ENCODE measurements at regions of chr15 and their contacts with region 1.

Region 1: GRCh38 chr15:38699633-38700230 is 135.1 kb upstream of the RASGRP1 start:
- DNase-seq: peak; percentile 76
- H3K4me3 ChIP-seq: no peak overlapping the region
- H3K27ac ChIP-seq: no peak overlapping the region
- H3K4me1 ChIP-seq: peaks cover 6 to 23% (median 15%) of the 10 kb centered on the region in 4 donors
- H3K27me3 ChIP-seq: no peaks in the 10 kb centered on the region
- CTCF ChIP-seq: peak; percentile 76 to 86 (median 81)
- EP300 ChIP-seq: no peak
- POLR2A ChIP-seq: no peak

Region 2: GRCh38 chr15:37995461-37996347 is 704.0 kb before region 1 on chr15:
- in situ Hi-C with region 1: loop called in 3 of 4 experiments (anchors 10 to 25 kb)
- intact Hi-C with region 1: no loop called
- DNase-seq: no peak
- H3K4me3 ChIP-seq: no peak overlapping the region
- H3K27ac ChIP-seq: no peak overlapping the region
- H3K4me1 ChIP-seq: no peaks in the 10 kb centered on the region
- H3K27me3 ChIP-seq: no peaks in the 10 kb centered on the region
- CTCF ChIP-seq: peak; percentile 44 to 55 (median 48)
- EP300 ChIP-seq: no peak
- POLR2A ChIP-seq: no peak

Region 3: GRCh38 chr15:38440353-38441129 is 259.2 kb before region 1 on chr15:
- in situ Hi-C with region 1: loop called in 1 of 4 experiments (anchors 25 kb)
- intact Hi-C with region 1: no loop called
- DNase-seq: peak; percentile 33
- H3K4me3 ChIP-seq: no peak overlapping the region
- H3K27ac ChIP-seq: no peak overlapping the region
- H3K4me1 ChIP-seq: peaks cover 0 to 10% (median 2%) of the 10 kb centered on the region in 4 donors
- H3K27me3 ChIP-seq: peaks cover 29% of the 10 kb centered on the region
- CTCF ChIP-seq: peak; percentile 91 to 96 (median 93)
- EP300 ChIP-seq: no peak
- POLR2A ChIP-seq: no peak

Region 4: DNA sequence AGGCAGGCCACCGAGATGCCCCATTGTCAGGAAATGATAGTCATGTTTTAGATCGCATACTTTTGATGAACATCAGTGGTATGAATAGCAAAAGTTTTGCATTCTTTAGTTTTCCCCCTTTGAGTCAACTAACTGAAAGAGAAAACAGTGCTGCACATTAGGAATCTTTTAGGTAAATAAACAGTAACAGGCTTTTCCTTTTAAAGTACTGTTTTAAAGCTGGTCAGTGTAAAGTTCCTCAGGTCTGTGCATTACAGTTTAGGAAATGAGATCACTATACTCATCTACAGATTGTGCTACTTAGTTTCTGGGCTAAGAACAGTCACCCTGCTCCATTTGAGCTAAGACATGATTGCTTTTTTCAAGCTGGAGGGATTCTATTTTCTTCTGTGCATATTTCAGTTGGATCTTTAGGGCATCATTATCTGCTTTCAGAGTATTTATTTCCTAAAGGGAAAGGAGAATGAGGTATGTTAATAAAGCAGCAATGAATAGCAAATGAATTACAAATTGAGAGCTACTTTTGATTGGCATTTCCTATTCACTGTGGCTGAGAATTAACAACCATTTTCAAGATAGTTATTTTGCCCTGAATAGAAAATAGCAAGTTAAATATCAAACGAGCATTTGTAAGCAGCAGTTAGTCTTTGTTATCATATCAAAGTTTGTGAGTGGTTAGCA is 209.3 kb before region 1 on chr15:
- in situ Hi-C with region 1: loop called in 1 of 4 experiments (anchors 25 kb)
- intact Hi-C with region 1: no loop called
- DNase-seq: no peak
- H3K4me3 ChIP-seq: no peak overlapping the region
- H3K27ac ChIP-seq: no peak overlapping the region
- H3K4me1 ChIP-seq: no peaks in the 10 kb centered on the region
- H3K27me3 ChIP-seq: no peaks in the 10 kb centered on the region
- CTCF ChIP-seq: no peak
- EP300 ChIP-seq: no peak
- POLR2A ChIP-seq: no peak

Region 5: GRCh38 chr15:38991126-38991525 is 291.4 kb after region 1 on chr15:
- in situ Hi-C with region 1: loop called in 1 of 4 experiments (anchors 25 kb)
- intact Hi-C with region 1: no loop called
- DNase-seq: no peak
- H3K4me3 ChIP-seq: no peak overlapping the region
- H3K27ac ChIP-seq: no peak overlapping the region
- H3K4me1 ChIP-seq: no peaks in the 10 kb centered on the region
- H3K27me3 ChIP-seq: no peaks in the 10 kb centered on the region
- CTCF ChIP-seq: peak; percentile 43 to 61 (median 48)
- EP300 ChIP-seq: no peak
- POLR2A ChIP-seq: no peak

Region 6: GRCh38 chr15:39756806-39757522 is 1057.2 kb after region 1 on chr15:
- in situ Hi-C with region 1: loop called (anchors 25 kb)
- intact Hi-C with region 1: loop called (anchors 10 kb)
- DNase-seq: no peak
- H3K4me3 ChIP-seq: no peak overlapping the region
- H3K27ac ChIP-seq: no peak overlapping the region
- H3K4me1 ChIP-seq: peaks cover 0 to 6% (median 2%) of the 10 kb centered on the region in 4 donors
- H3K27me3 ChIP-seq: no peaks in the 10 kb centered on the region
- CTCF ChIP-seq: peak; percentile 71 to 93 (median 85)
- EP300 ChIP-seq: no peak
- POLR2A ChIP-seq: no peak

Measured in transverse colon (tissue), 4 donors.